Naive thymus-derived CD4-positive, alpha-beta T cell (primary cell): ENCODE measurements at regions of chr1 and their contacts with region 1.

Region 1: GRCh38 chr1:32221980-32222755 is at the starts of genes EIF3I and TMEM234:
- DNase-seq: peak; percentile 71 to 94 (median 89)
- ATAC-seq: peak; percentile 95
- H3K4me3 ChIP-seq: peak within 1 kb of the TSS; percentile 99
- H3K4me3 Mint-ChIP-seq: peak within 1 kb of the TSS; percentile 90 to 98 (median 97)
- H3K27ac ChIP-seq: peak within 1 kb of the TSS; percentile 99
- H3K27ac Mint-ChIP-seq: peak within 1 kb of the TSS; percentile 94 to 99 (median 98)
- H3K4me1 ChIP-seq: peaks cover 23 to 24% of the 10 kb centered on the region in 2 donors
- H3K4me1 Mint-ChIP-seq: peaks cover 14 to 57% (median 37%) of the 10 kb centered on the region in 7 donors
- H3K27me3 ChIP-seq: no peaks in the 10 kb centered on the region
- H3K27me3 Mint-ChIP-seq: no peaks in the 10 kb centered on the region
- total RNA-seq, gene EIF3I: 82.6 to 182 (median 104) TPM
- total RNA-seq, gene TMEM234: 15.9 to 29.6 (median 21.4) TPM

Region 2: GRCh38 chr1:32082022-32082421 is 140.1 kb before region 1 on chr1:
- CTCF ChIA-PET with region 1: no interaction called
- POLR2A ChIA-PET with region 1: no interaction called
- intact Hi-C with region 1: no loop called
- DNase-seq: no peak
- ATAC-seq: no peak
- H3K4me3 ChIP-seq: no peak overlapping the region
- H3K4me3 Mint-ChIP-seq: no peak overlapping the region
- H3K27ac ChIP-seq: no peak overlapping the region
- H3K27ac Mint-ChIP-seq: peak overlapping the region in 3 of 9 donors; percentile 29 to 50 (median 46)
- H3K4me1 ChIP-seq: no peaks in the 10 kb centered on the region
- H3K4me1 Mint-ChIP-seq: peaks cover 4 to 19% (median 15%) of the 10 kb centered on the region in 7 donors
- H3K27me3 ChIP-seq: no peaks in the 10 kb centered on the region
- H3K27me3 Mint-ChIP-seq: no peaks in the 10 kb centered on the region

Region 3: GRCh38 chr1:32200226-32201010 is 21.8 kb before region 1 on chr1 and contains the start of gene CCDC28B:
- CTCF ChIA-PET with region 1: no interaction called
- POLR2A ChIA-PET with region 1: interaction called, 5 read pairs
- intact Hi-C with region 1: loop called (anchors 1 kb)
- DNase-seq: peak; percentile 35 to 71 (median 62)
- ATAC-seq: peak; percentile 59
- H3K4me3 ChIP-seq: peak within 1 kb of the TSS; percentile 96
- H3K4me3 Mint-ChIP-seq: peak within 1 kb of the TSS; percentile 78 to 99 (median 94)
- H3K27ac ChIP-seq: peak within 1 kb of the TSS; percentile 99
- H3K27ac Mint-ChIP-seq: peak within 1 kb of the TSS; percentile 72 to 98 (median 91)
- H3K4me1 ChIP-seq: peaks cover 32 to 35% of the 10 kb centered on the region in 2 donors
- H3K4me1 Mint-ChIP-seq: peaks cover 41 to 73% (median 60%) of the 10 kb centered on the region in 7 donors
- H3K27me3 ChIP-seq: no peaks in the 10 kb centered on the region
- H3K27me3 Mint-ChIP-seq: no peaks in the 10 kb centered on the region
- total RNA-seq, gene CCDC28B: 6.2 to 39.0 (median 8.7) TPM

Region 4: DNA sequence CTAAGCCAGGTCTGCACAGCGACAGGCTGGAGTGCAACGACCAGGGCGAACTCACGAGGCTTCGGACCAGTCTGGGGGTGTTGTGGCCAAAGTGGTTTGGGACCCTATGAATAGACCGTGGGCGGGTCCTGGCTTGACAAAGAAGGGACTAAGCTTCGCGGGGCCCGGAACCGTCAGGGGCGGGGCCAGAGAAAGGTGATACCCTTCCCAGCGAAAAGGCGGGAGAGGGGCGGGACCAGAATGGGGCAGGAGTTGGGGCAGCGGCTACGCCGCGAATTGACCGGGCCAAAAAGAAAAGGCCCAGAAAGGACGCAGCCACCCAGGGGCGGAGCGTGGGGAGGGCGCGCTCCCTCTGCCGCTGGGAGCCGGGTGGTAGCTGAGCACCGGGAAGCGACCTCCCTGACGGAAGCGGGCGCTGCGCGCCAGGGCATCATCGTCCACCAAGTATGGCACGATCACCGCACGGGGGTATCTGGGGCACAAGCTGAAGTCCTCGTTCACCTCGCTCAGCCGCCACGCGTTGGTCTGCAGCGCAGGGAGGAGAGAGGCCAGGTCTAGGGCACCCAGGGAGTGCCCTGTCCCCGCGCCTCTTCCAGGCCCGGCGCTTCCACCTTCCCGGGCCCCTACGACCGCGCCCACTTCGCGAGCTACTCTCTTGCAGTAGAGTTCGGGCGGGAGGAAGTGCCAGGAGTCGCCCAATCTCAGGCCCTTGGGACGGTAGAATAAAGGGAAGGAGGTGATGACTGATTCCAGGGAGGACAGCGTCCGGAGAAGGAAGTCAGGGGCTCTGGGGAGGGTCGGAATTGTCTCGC is 18.2 kb after region 1 on chr1:
- CTCF ChIA-PET with region 1: interaction called, 15 read pairs
- POLR2A ChIA-PET with region 1: interaction called, 15 read pairs
- intact Hi-C with region 1: loop called in 1 of 2 experiments (anchors 1 kb)
- DNase-seq: peak in 7 of 9 donors; percentile 33 to 73 (median 57)
- ATAC-seq: peak; percentile 78
- H3K4me3 ChIP-seq: peak overlapping the region; percentile 94
- H3K4me3 Mint-ChIP-seq: peak overlapping the region; percentile 87 to 93 (median 91)
- H3K27ac ChIP-seq: peak overlapping the region; percentile 68
- H3K27ac Mint-ChIP-seq: peak overlapping the region in 8 of 9 donors; percentile 40 to 92 (median 83)
- H3K4me1 ChIP-seq: peaks cover 8 to 17% of the 10 kb centered on the region in 2 donors
- H3K4me1 Mint-ChIP-seq: peaks cover 6 to 31% (median 22%) of the 10 kb centered on the region in 7 donors
- H3K27me3 ChIP-seq: no peaks in the 10 kb centered on the region
- H3K27me3 Mint-ChIP-seq: no peaks in the 10 kb centered on the region

Region 5: GRCh38 chr1:32273388-32274208 is 51.4 kb after region 1 on chr1:
- CTCF ChIA-PET with region 1: no interaction called
- POLR2A ChIA-PET with region 1: interaction called, 5 read pairs
- intact Hi-C with region 1: loop called in 1 of 2 experiments (anchors 1 kb)
- DNase-seq: peak; percentile 34 to 96 (median 88)
- ATAC-seq: peak; percentile 94
- H3K4me3 ChIP-seq: peak overlapping the region; percentile 49
- H3K4me3 Mint-ChIP-seq: peak overlapping the region; percentile 74 to 91 (median 88)
- H3K27ac ChIP-seq: peak overlapping the region; percentile 79
- H3K27ac Mint-ChIP-seq: peak overlapping the region; percentile 77 to 99 (median 97)
- H3K4me1 ChIP-seq: peaks cover 42 to 69% of the 10 kb centered on the region in 2 donors
- H3K4me1 Mint-ChIP-seq: peaks cover 45 to 86% (median 62%) of the 10 kb centered on the region in 7 donors
- H3K27me3 ChIP-seq: no peaks in the 10 kb centered on the region
- H3K27me3 Mint-ChIP-seq: no peaks in the 10 kb centered on the region

Region 6: DNA sequence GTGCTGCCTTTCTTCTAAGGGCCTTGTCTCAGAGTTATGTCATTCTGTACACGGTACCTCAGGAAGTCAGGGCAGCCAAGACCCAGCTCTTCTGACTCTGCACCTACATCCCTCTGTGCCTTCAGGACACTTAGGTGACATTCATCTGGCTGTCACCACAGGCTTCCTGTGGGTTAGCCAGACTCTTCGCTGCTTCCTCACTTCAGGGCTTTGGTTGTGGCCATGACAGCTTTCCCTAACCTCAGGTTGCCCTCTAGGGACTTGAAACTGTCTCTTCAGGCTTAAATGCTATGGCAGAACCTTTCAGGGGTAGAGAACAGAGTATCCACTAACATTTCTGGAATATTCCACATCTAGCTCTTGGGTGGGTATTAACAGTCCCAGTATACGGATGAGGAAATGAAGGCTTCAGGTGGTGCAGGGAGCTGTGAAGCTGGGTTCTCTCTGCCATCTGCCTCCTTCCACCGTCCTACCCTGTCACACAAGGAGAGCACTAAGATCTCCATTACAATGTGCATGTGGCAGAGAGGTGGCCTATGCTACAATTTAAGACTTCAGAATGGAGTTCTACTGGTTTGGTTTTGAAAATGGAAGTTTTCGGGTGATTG is 150.1 kb after region 1 on chr1:
- CTCF ChIA-PET with region 1: interaction called, 21 read pairs
- POLR2A ChIA-PET with region 1: no interaction called
- intact Hi-C with region 1: loop called in 1 of 2 experiments (anchors 2 kb)
- DNase-seq: peak; percentile 22 to 78 (median 68)
- ATAC-seq: peak; percentile 88
- H3K4me3 ChIP-seq: no peak overlapping the region
- H3K4me3 Mint-ChIP-seq: peak overlapping the region in 2 of 10 donors; percentile 6 to 9
- H3K27ac ChIP-seq: peak overlapping the region; percentile 20
- H3K27ac Mint-ChIP-seq: peak overlapping the region in 7 of 9 donors; percentile 1 to 75 (median 57)
- H3K4me1 ChIP-seq: peaks cover 12% of the 10 kb centered on the region in 2 donors
- H3K4me1 Mint-ChIP-seq: peaks cover 15 to 22% (median 20%) of the 10 kb centered on the region in 7 donors
- H3K27me3 ChIP-seq: no peaks in the 10 kb centered on the region
- H3K27me3 Mint-ChIP-seq: no peaks in the 10 kb centered on the region